ENCODE measurements at regions of chr11 and their contacts with region 1.

Region 1: DNA sequence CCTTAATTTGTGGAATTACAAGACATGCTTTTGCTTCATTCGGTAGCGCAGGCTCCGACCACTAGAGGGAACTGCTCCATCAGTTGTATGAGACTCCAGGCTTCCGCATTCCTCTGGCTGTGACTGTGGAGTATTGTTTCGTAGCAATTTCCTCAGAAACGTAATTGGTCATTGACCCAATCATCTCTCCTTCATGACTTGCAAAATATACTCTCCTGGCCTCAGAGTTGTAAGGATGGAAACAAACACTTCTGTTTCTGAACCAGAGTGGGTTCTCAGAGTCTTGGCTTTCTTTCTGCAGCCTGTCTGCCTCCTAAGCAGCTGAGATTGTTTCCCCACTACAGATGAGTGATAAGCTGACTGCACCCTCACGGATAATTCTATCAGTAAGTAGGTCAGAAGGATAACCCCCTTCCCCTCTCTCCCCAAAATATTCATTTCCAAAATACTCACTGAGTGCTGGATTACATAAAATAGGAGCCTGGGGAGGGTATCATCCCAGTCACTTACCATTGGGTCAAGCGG is 146.8 kb upstream of the ZC3H12C start:
- DNase-seq: peak in 3 of 5 donors; percentile 4 to 26 (median 5)
- H3K4me3 ChIP-seq: no peak overlapping the region
- H3K4me3 Mint-ChIP-seq: peak overlapping the region in 6 of 8 donors; percentile 0 to 76 (median 54)
- H3K27ac ChIP-seq: no peak overlapping the region
- H3K27ac Mint-ChIP-seq: peak overlapping the region in 1 of 7 donors; percentile 6
- H3K4me1 ChIP-seq: no peaks in the 10 kb centered on the region
- H3K4me1 Mint-ChIP-seq: peaks cover 0 to 8% (median 6%) of the 10 kb centered on the region in 4 donors
- H3K27me3 ChIP-seq: no peaks in the 10 kb centered on the region
- H3K27me3 Mint-ChIP-seq: peaks cover 1 to 7% of the 10 kb centered on the region in 2 donors

Region 2: GRCh38 chr11:110376711-110377324 is 430.4 kb after region 1 on chr11:
- CTCF ChIA-PET with region 1: no interaction called
- POLR2A ChIA-PET with region 1: no interaction called
- intact Hi-C with region 1: loop called (anchors 5 kb)
- DNase-seq: peak in 4 of 5 donors; percentile 30 to 40 (median 38)
- H3K4me3 ChIP-seq: no peak overlapping the region
- H3K4me3 Mint-ChIP-seq: no peak overlapping the region
- H3K27ac ChIP-seq: no peak overlapping the region
- H3K27ac Mint-ChIP-seq: no peak overlapping the region
- H3K4me1 ChIP-seq: peaks cover 11% of the 10 kb centered on the region
- H3K4me1 Mint-ChIP-seq: peaks cover 0 to 6% (median 5%) of the 10 kb centered on the region in 4 donors
- H3K27me3 ChIP-seq: no peaks in the 10 kb centered on the region
- H3K27me3 Mint-ChIP-seq: no peaks in the 10 kb centered on the region